ENCODE measurements at regions of chrX and their contacts with region 1.

Region 1: DNA sequence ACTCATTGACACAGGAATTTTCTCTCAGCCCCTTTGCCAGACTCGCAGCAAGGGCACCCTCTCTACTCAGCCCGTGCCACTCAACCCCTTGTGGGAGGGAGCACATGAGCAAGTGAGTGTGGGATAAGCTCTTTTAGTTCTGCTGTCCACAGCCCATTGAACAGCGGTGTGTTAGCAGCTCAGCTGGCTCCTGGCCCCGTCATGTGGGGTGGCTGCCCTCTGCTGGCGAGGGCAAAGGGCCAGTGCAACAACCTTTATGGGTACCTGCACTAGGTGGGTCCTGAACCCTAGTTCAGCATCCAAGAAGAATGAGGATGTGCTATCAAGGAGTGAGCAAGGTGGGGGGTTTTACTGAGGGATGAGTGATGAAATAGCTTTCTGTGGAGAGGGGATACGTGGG is 85.0 kb upstream of the ZNF81 start:
- DNase-seq: peak; percentile 44 to 55
- H3K4me3 ChIP-seq: no peak overlapping the region
- H3K4me3 Mint-ChIP-seq: no peak overlapping the region
- H3K27ac Mint-ChIP-seq: no peak overlapping the region
- H3K4me1 ChIP-seq: no peaks in the 10 kb centered on the region
- H3K4me1 Mint-ChIP-seq: no peaks in the 10 kb centered on the region
- H3K27me3 ChIP-seq: no peaks in the 10 kb centered on the region
- H3K27me3 Mint-ChIP-seq: peaks cover 7% of the 10 kb centered on the region
- CTCF ChIP-seq: peak; percentile 50 to 64

Region 2: GRCh38 chrX:47628980-47629379 is 122.7 kb before region 1 on chrX:
- CTCF ChIA-PET with region 1: interaction called, 10 read pairs
- POLR2A ChIA-PET with region 1: no interaction called
- intact Hi-C with region 1: no loop called
- DNase-seq: peak; percentile 61 to 62
- H3K4me3 ChIP-seq: no peak overlapping the region
- H3K4me3 Mint-ChIP-seq: no peak overlapping the region
- H3K27ac Mint-ChIP-seq: no peak overlapping the region
- H3K4me1 ChIP-seq: no peaks in the 10 kb centered on the region
- H3K4me1 Mint-ChIP-seq: no peaks in the 10 kb centered on the region
- H3K27me3 ChIP-seq: no peaks in the 10 kb centered on the region
- H3K27me3 Mint-ChIP-seq: no peaks in the 10 kb centered on the region
- CTCF ChIP-seq: peak in 1 of 2 experiments; percentile 19

Region 3: GRCh38 chrX:47900833-47901232 is 149.2 kb after region 1 on chrX:
- CTCF ChIA-PET with region 1: no interaction called
- POLR2A ChIA-PET with region 1: no interaction called
- intact Hi-C with region 1: no loop called
- DNase-seq: no peak
- H3K4me3 ChIP-seq: no peak overlapping the region
- H3K4me3 Mint-ChIP-seq: no peak overlapping the region
- H3K27ac Mint-ChIP-seq: no peak overlapping the region
- H3K4me1 ChIP-seq: no peaks in the 10 kb centered on the region
- H3K4me1 Mint-ChIP-seq: no peaks in the 10 kb centered on the region
- H3K27me3 ChIP-seq: no peaks in the 10 kb centered on the region
- H3K27me3 Mint-ChIP-seq: no peaks in the 10 kb centered on the region
- CTCF ChIP-seq: no peak